Dorsolateral prefrontal cortex (tissue), 120 donors: ENCODE measurements at regions of chr4 and their contacts with region 1.

Region 1: GRCh38 chr4:183905081-183905592 is at the start of gene STOX2:
- DNase-seq: peak; percentile 72 to 91 (median 88)
- H3K4me3 ChIP-seq: peak within 1 kb of the TSS; percentile 56 to 92 (median 80)
- H3K27ac ChIP-seq: peak within 1 kb of the TSS; percentile 77 to 97 (median 94)
- H3K27me3 ChIP-seq: no peaks in the 10 kb centered on the region
- CTCF ChIP-seq: peak in 7 of 56 donors; percentile 1 to 18 (median 13)
- total RNA-seq, gene STOX2: 50.8 to 117 (median 73.3) TPM

Region 2: GRCh38 chr4:183504064-183504929 is 400.8 kb before region 1 on chr4:
- intact Hi-C with region 1: loop called in 1 of 2 experiments (anchors 5 kb)
- DNase-seq: peak; percentile 97 to 100 (median 98)
- H3K4me3 ChIP-seq: peak overlapping the region; percentile 70 to 100 (median 93)
- H3K27ac ChIP-seq: peak overlapping the region; percentile 88 to 100 (median 98)
- H3K27me3 ChIP-seq: no peaks in the 10 kb centered on the region
- CTCF ChIP-seq: peak in 40 of 56 donors; percentile 12 to 59 (median 41)

Region 3: DNA sequence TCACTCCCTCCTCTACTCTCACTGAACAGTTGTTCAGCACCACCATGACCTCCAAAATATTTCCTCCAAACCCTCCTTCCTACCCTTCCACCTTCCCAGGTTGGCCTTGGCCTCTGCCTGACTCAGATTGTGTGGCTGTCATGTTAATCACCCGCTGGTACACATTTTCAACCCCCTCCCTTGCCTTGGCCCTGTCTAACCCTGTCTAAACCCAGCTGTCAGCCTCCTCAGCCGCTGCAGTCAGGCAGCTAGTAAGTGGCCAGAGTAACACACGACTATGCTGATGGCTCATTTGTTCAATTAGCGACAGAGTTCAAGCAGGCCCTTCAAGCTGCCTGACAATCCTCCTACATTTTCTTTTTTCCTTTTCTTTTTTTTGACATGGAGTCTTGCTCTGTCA is 382.3 kb before region 1 on chr4:
- intact Hi-C with region 1: no loop called
- DNase-seq: no peak
- H3K4me3 ChIP-seq: no peak overlapping the region
- H3K27ac ChIP-seq: no peak overlapping the region
- H3K27me3 ChIP-seq: no peaks in the 10 kb centered on the region
- CTCF ChIP-seq: no peak

Region 4: GRCh38 chr4:183722731-183723560 is 182.2 kb before region 1 on chr4:
- intact Hi-C with region 1: no loop called
- DNase-seq: peak in 6 of 10 donors; percentile 13 to 56 (median 46)
- H3K4me3 ChIP-seq: peak overlapping the region; percentile 32 to 77 (median 63)
- H3K27ac ChIP-seq: peak overlapping the region in 1 of 59 donors; percentile 45
- H3K27me3 ChIP-seq: no peaks in the 10 kb centered on the region
- CTCF ChIP-seq: peak in 4 of 56 donors; percentile 6 to 39 (median 18)

Region 5: GRCh38 chr4:183876268-183876934 is 28.7 kb before region 1 on chr4:
- intact Hi-C with region 1: no loop called
- DNase-seq: peak in 3 of 10 donors; percentile 28 to 39 (median 35)
- H3K4me3 ChIP-seq: peak overlapping the region; percentile 15 to 73 (median 52)
- H3K27ac ChIP-seq: peak overlapping the region in 15 of 59 donors; percentile 1 to 68 (median 41)
- H3K27me3 ChIP-seq: no peaks in the 10 kb centered on the region
- CTCF ChIP-seq: no peak

Region 6: GRCh38 chr4:183960046-183960420 is 54.9 kb after region 1 on chr4:
- intact Hi-C with region 1: loop called (anchors 2 kb)
- DNase-seq: peak; percentile 82 to 98 (median 92)
- H3K4me3 ChIP-seq: peak overlapping the region; percentile 26 to 76 (median 55)
- H3K27ac ChIP-seq: peak overlapping the region; percentile 33 to 97 (median 90)
- H3K27me3 ChIP-seq: no peaks in the 10 kb centered on the region
- CTCF ChIP-seq: peak in 6 of 56 donors; percentile 5 to 30 (median 16)

Region 7: DNA sequence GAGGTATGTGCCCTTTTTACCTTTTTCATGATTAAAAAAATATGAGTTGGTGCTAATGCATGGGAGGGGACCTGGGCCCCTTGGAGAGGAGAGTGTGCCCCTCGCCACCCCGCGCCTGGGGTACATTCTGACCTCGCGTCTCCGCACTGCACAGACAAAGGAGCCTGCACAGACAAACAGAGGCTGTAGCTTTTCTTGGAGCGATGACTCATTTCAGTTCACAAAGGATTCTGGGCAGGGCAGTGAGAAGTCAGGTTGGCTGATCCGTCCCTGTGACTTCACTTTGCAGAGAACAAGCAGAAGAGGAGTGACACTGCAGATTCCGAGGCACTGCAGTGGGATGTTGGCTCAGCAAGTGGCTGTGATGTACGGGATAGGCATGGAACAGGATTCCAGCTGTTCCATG is 82.9 kb after region 1 on chr4:
- intact Hi-C with region 1: loop called (anchors 2 kb)
- DNase-seq: peak; percentile 33 to 91 (median 74)
- H3K4me3 ChIP-seq: peak overlapping the region; percentile 29 to 75 (median 57)
- H3K27ac ChIP-seq: peak overlapping the region; percentile 18 to 95 (median 88)
- H3K27me3 ChIP-seq: no peaks in the 10 kb centered on the region
- CTCF ChIP-seq: peak in 2 of 56 donors; percentile 11 to 17

Region 8: GRCh38 chr4:184100297-184100885 is 195.3 kb after region 1 on chr4:
- intact Hi-C with region 1: loop called (anchors 5 kb)
- DNase-seq: peak in 4 of 10 donors; percentile 49 to 83 (median 67)
- H3K4me3 ChIP-seq: no peak overlapping the region
- H3K27ac ChIP-seq: peak overlapping the region in 58 of 59 donors; percentile 3 to 92 (median 68)
- H3K27me3 ChIP-seq: no peaks in the 10 kb centered on the region
- CTCF ChIP-seq: peak in 43 of 56 donors; percentile 37 to 95 (median 67)

Region 9: DNA sequence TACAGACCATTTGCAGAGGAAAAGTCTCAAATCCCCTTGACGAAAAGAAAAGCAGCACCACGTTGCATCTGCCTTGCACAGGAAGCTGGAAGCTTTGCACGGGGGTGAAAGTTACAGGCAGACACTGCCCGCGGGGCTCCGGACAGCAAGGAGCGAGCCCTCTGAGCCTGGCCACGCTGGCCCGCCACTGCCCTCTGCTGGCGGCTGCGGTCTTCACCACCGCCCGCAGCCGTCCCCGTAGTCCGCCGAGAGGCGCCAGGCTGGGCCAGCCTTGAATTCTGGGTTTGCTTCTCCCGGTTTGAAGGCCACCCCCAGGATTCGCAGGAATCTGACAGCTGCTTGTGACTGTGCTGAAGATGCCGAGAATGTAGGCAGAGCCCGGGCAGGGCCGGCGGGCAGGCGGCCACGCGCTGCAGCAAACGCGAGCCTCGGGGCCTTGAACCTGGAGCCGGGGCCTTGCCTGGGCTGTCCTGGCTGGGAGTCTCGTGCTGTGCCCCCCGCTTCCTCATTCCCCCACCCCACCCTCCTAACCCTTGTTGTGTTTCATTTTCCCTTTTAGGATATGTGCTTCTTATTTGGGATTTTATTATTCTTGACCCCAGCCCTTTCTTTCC is 263.4 kb after region 1 on chr4:
- intact Hi-C with region 1: loop called (anchors 5 to 10 kb)
- DNase-seq: peak; percentile 58 to 88 (median 74)
- H3K4me3 ChIP-seq: peak overlapping the region in 50 of 59 donors; percentile 6 to 52 (median 34)
- H3K27ac ChIP-seq: peak overlapping the region in 28 of 59 donors; percentile 7 to 72 (median 48)
- H3K27me3 ChIP-seq: no peaks in the 10 kb centered on the region
- CTCF ChIP-seq: peak; percentile 60 to 98 (median 95)